GM18951 (cell line): ENCODE measurements at regions of chr10 and their contacts with region 1.

Region 1: GRCh38 chr10:116792817-116793216 is 50.5 kb upstream of the HSPA12A start:
- POLR2A ChIP-seq: no peak

Region 2: GRCh38 chr10:117074621-117075020 is 281.8 kb after region 1 on chr10:
- in situ Hi-C with region 1: no loop called
- POLR2A ChIP-seq: no peak

Region 3: GRCh38 chr10:117174439-117175214 is 381.8 kb after region 1 on chr10:
- in situ Hi-C with region 1: loop called (anchors 5 kb)
- POLR2A ChIP-seq: no peak